ENCODE measurements at regions of chr3 and their contacts with region 1.

Region 1: DNA sequence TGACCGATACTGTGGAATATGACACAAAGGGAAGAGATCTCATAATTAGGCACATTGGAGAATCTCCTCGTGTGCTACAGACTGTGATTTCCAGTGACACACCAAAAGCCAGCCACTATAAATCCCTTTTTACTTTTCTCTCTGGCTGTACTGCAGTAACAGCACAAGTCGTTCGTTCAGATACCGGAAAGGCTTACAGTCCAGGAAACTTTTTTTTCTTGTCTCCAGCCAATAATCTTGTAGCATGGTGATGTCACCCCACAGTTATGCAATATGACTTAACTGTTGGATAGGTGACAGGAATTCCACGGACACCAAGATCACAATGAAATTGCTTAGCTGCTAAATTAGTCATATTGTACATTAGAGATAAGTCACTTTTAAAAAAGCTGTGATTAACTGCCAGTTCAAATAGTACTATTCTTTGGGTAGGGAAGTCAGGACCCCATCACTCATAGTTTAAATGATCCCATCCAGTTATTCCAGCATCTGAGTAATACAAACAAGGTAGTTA is 36.3 kb upstream of the TSC22D2 start:
- DNase-seq: peak; percentile 72 to 78
- H3K4me3 ChIP-seq: peak overlapping the region; percentile 43
- H3K4me3 Mint-ChIP-seq: peak overlapping the region; percentile 71
- H3K27ac Mint-ChIP-seq: peak overlapping the region; percentile 86
- H3K4me1 ChIP-seq: peaks cover 46% of the 10 kb centered on the region
- H3K4me1 Mint-ChIP-seq: peaks cover 23% of the 10 kb centered on the region
- H3K27me3 ChIP-seq: no peaks in the 10 kb centered on the region
- H3K27me3 Mint-ChIP-seq: no peaks in the 10 kb centered on the region
- CTCF ChIP-seq: no peak

Region 2: DNA sequence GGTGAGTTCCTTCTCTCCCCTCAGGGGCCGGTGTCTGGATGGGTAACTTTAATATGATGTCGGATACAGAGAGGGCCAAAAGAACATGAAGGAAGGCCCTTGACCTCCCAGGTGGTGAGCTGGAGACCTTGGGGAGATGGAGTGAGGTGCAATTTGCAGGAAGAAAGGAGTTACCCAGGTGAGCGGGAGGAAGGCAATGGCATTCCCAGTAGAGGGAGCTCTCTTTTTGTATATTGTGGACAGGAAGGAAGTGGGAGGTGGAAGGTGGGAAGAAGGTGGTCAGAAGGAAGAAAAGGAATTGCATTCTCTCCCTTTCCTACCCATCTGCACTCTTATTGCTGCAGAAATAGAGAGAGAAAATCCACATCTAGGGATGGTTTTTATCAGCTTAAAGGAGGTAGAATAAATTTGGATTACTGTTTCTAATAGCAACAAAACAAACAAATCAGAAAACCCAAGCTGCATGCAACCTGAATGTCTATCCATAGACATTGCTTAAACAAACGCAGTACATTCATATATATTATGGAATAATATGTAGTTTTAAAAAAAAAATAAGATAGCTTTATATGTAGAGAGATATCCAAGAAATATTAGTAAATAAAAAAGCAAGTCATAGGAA is 132.7 kb before region 1 on chr3:
- CTCF ChIA-PET with region 1: no interaction called
- POLR2A ChIA-PET with region 1: interaction called, 3 read pairs
- intact Hi-C with region 1: loop called (anchors 2 kb)
- DNase-seq: peak; percentile 54 to 64
- H3K4me3 ChIP-seq: no peak overlapping the region
- H3K4me3 Mint-ChIP-seq: no peak overlapping the region
- H3K27ac Mint-ChIP-seq: no peak overlapping the region
- H3K4me1 ChIP-seq: peaks cover 28% of the 10 kb centered on the region
- H3K4me1 Mint-ChIP-seq: peaks cover 26% of the 10 kb centered on the region
- H3K27me3 ChIP-seq: no peaks in the 10 kb centered on the region
- H3K27me3 Mint-ChIP-seq: no peaks in the 10 kb centered on the region
- CTCF ChIP-seq: peak; percentile 65 to 86

Region 3: GRCh38 chr3:150314248-150315004 is 57.4 kb before region 1 on chr3:
- CTCF ChIA-PET with region 1: no interaction called
- POLR2A ChIA-PET with region 1: no interaction called
- intact Hi-C with region 1: loop called (anchors 2 kb)
- DNase-seq: peak; percentile 58 to 73
- H3K4me3 ChIP-seq: no peak overlapping the region
- H3K4me3 Mint-ChIP-seq: no peak overlapping the region
- H3K27ac Mint-ChIP-seq: no peak overlapping the region
- H3K4me1 ChIP-seq: peaks cover 33% of the 10 kb centered on the region
- H3K4me1 Mint-ChIP-seq: peaks cover 31% of the 10 kb centered on the region
- H3K27me3 ChIP-seq: no peaks in the 10 kb centered on the region
- H3K27me3 Mint-ChIP-seq: no peaks in the 10 kb centered on the region
- CTCF ChIP-seq: no peak

Measured in Caco-2 (cell line).